WTC11 (cell line): ENCODE measurements at regions of chr3 and their contacts with region 1.

Region 1: GRCh38 chr3:50154840-50155474 is at the start of gene SEMA3F:
- DNase-seq: peak; percentile 67
- ATAC-seq: peak; percentile 38
- H3K4me3 Mint-ChIP-seq: peak within 1 kb of the TSS; percentile 95
- H3K27ac Mint-ChIP-seq: peak within 1 kb of the TSS; percentile 84; the same call in 1 of the 2 replicates
- H3K4me1 Mint-ChIP-seq: peaks cover 71% of the 10 kb centered on the region
- H3K27me3 Mint-ChIP-seq: peaks cover 26% of the 10 kb centered on the region
- CTCF ChIP-seq: no peak
- total RNA-seq, gene SEMA3F: 49.0 to 52.0 TPM (median 52.0 TPM) in 3 replicates

Region 2: DNA sequence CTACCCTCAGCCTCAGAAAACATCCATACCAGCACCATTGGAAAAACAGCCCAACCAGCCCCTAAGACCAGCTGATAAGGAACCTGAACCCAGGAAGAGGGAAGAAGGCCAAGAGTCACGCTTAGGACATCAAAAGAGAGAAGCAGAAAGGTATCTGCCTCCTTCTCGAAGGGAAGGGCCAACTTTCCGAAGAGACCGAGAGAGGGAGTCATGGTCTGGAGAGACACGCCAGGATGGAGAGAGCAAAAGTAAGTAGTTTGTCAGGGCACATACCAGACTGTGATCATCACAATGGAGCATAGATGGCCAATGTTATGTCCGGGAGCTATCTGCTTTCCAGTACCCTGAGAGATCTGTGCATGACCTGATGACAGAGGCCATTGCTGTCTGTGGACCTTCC is 97.2 kb before region 1 on chr3:
- CTCF ChIA-PET with region 1: no interaction called
- POLR2A ChIA-PET with region 1: no interaction called
- DNase-seq: no peak
- ATAC-seq: no peak
- H3K4me3 Mint-ChIP-seq: no peak overlapping the region
- H3K27ac Mint-ChIP-seq: no peak overlapping the region
- H3K4me1 Mint-ChIP-seq: no peaks in the 10 kb centered on the region
- H3K27me3 Mint-ChIP-seq: no peaks in the 10 kb centered on the region
- CTCF ChIP-seq: no peak

Region 3: DNA sequence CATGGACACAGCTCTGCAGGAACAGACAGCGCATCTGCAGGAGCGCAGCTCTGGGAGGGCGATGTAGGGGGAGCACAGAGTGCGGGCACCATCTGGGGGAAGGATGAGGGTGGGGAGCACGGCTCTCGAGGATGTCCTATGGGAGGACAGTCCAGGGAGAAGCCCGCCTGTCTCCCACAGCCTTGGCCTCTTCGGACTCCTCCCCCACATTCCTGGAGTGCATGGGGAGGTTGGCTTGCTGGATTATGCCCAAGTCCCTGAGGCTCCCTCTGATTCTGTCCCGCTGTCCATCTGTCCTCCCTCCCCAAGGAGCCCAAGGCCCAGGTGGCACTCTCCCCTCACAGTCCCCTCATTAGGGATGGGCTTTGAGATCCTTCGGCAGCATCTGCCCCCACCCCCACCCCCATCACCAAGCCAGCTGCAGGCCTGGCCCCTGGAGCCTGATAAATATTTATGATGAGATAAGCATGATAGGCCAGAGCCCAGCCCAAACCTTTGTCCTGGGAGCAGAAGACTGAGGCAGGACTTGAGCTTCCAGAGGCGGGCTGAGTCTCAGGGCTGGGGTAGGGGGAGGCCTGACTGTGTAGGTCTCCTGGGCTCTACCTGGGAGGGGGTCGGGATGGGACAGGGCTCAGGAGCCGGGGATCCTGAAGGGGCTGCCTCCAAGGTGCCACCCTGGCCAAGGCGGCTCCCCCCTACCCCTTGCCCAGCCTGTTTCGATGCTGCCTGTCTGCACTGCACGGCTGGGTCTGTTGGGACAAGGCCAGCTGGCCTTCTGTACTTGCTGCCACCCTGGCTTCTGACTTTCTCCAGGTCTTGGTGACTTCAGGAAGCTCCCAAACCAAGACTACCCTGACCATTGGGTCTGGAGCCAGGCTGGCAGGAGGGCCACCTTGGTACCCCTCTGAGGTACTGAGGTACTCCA is 28.4 kb before region 1 on chr3:
- CTCF ChIA-PET with region 1: interaction called, 13 read pairs
- POLR2A ChIA-PET with region 1: interaction called, 4 read pairs
- DNase-seq: no peak
- ATAC-seq: peak; percentile 3; the same call in 1 of the 2 replicates
- H3K4me3 Mint-ChIP-seq: no peak overlapping the region
- H3K27ac Mint-ChIP-seq: no peak overlapping the region
- H3K4me1 Mint-ChIP-seq: peaks cover 38% of the 10 kb centered on the region
- H3K27me3 Mint-ChIP-seq: no peaks in the 10 kb centered on the region
- CTCF ChIP-seq: no peak

Region 4: GRCh38 chr3:50164984-50165909 is 10.3 kb after region 1 on chr3:
- CTCF ChIA-PET with region 1: interaction called, 10 read pairs
- POLR2A ChIA-PET with region 1: no interaction called
- DNase-seq: no peak
- ATAC-seq: peak; percentile 11
- H3K4me3 Mint-ChIP-seq: no peak overlapping the region
- H3K27ac Mint-ChIP-seq: peak overlapping the region; percentile 71
- H3K4me1 Mint-ChIP-seq: peaks cover 48% of the 10 kb centered on the region
- H3K27me3 Mint-ChIP-seq: no peaks in the 10 kb centered on the region
- CTCF ChIP-seq: no peak

Region 5: DNA sequence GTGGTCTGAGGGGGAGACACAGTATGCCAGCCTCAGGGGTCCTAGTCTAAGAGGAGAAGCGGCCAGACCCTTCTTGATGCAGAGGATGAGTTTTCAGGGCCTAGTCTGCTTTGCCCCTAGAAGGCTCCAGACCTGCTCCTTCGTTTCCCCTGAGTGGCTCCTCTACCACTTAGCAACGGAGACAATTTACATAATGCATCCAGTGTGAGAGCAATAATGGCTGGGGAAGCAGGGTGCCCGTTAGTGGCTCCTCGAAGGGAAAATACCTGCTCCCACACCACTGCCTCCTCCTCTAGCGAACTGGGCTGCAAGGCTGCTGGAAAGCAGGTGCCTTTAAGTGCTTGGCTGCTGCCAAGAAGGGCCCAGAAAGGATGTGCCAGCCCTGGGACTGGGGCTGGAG is 309.6 kb after region 1 on chr3:
- CTCF ChIA-PET with region 1: no interaction called
- POLR2A ChIA-PET with region 1: no interaction called
- DNase-seq: no peak
- ATAC-seq: no peak
- H3K4me3 Mint-ChIP-seq: no peak overlapping the region
- H3K27ac Mint-ChIP-seq: no peak overlapping the region
- H3K4me1 Mint-ChIP-seq: peaks cover 13% of the 10 kb centered on the region
- H3K27me3 Mint-ChIP-seq: no peaks in the 10 kb centered on the region
- CTCF ChIP-seq: no peak